ENCODE measurements at regions of chrX and their contacts with region 1.

Region 1: DNA sequence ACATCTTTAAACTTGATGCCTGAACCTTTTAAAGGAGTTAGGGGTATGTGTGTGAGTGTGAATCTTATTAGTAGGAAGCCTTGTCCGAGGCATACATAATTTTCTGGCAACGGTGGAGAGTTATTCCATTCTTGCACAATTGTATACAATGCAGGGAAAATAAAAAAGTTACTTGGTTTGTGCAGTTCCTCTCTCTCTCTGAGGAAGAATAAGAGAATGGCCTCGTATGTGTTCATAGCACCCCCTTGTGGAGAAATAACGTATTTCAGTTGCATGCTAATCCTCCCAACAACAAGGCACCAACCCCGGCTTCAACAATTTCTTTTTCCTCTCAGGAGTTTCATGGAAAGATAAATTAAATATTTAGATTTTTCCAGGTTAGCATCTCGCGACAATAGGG is 33.7 kb upstream of the FGF13 start:
- DNase-seq: peak; percentile 6
- ATAC-seq: no peak
- H3K4me3 Mint-ChIP-seq: no peak overlapping the region
- H3K27ac Mint-ChIP-seq: no peak overlapping the region
- H3K4me1 Mint-ChIP-seq: no peaks in the 10 kb centered on the region
- H3K27me3 Mint-ChIP-seq: peaks cover 5% of the 10 kb centered on the region

Region 2: DNA sequence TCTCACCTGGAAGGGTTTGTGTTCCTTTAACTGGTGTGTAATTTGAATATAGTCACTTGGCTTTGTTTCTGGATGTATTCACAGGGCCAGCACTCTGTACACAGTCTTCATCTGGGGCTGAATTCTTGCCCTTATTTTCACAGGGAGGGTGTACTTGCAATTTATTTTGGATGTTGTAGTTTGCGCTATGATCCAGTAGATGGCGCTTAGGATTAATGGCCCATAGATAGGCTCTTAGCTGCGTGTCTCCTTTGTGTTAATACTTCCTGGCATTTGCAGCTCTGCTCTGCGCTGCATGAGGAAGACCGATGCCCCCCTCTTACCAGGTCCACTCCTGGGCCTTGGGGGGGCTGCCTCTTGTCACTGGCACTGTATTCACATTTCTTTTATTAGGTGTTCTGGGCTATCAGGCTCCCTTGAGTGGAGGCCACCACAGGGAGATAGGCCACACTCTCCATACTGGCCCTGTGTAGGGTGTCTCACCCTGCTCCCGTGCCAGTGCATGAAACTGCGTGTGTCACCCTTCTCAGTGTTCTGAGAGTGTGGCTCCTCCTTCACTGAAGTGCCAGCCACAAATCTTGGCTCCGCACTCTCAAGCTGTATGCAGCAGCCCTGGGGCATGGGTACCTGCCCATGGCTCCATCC is 617.0 kb before region 1 on chrX:
- CTCF ChIA-PET with region 1: interaction called, 4 read pairs
- POLR2A ChIA-PET with region 1: no interaction called
- intact Hi-C with region 1: loop called in 1 of 2 experiments (anchors 1 kb)
- DNase-seq: peak; percentile 7
- ATAC-seq: no peak
- H3K4me3 Mint-ChIP-seq: no peak overlapping the region
- H3K27ac Mint-ChIP-seq: no peak overlapping the region
- H3K4me1 Mint-ChIP-seq: no peaks in the 10 kb centered on the region
- H3K27me3 Mint-ChIP-seq: no peaks in the 10 kb centered on the region

Region 3: GRCh38 chrX:138191998-138192397 is 553.2 kb before region 1 on chrX:
- CTCF ChIA-PET with region 1: interaction called, 3 read pairs
- POLR2A ChIA-PET with region 1: no interaction called
- intact Hi-C with region 1: loop called in 1 of 2 experiments (anchors 2 kb)
- DNase-seq: peak; percentile 15
- ATAC-seq: no peak
- H3K4me3 Mint-ChIP-seq: no peak overlapping the region
- H3K27ac Mint-ChIP-seq: no peak overlapping the region
- H3K4me1 Mint-ChIP-seq: no peaks in the 10 kb centered on the region
- H3K27me3 Mint-ChIP-seq: no peaks in the 10 kb centered on the region

Region 4: DNA sequence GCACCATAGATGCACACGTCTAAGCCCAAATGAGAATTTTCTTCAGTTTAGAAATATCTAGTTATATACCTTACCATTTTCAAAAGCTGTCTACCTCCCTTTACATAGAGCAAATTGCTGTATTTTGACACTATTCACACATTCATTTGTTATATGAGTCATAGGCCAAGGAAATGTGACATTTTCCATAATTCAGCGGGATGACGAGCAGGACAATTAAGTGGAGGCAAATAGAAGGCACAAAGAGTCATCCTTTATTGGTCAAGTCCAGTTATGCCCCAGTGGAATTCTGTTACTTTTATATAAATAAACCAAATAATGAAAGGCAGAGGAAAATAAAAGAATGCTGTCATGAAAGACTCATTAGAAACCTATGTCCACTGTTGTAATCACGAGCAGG is 61.6 kb before region 1 on chrX:
- CTCF ChIA-PET with region 1: no interaction called
- POLR2A ChIA-PET with region 1: no interaction called
- intact Hi-C with region 1: no loop called
- DNase-seq: no peak
- ATAC-seq: no peak
- H3K4me3 Mint-ChIP-seq: no peak overlapping the region
- H3K27ac Mint-ChIP-seq: no peak overlapping the region
- H3K4me1 Mint-ChIP-seq: no peaks in the 10 kb centered on the region
- H3K27me3 Mint-ChIP-seq: no peaks in the 10 kb centered on the region

Measured in activated CD4-positive, alpha-beta T cell treated with anti-CD3 and anti-CD28 coated beads for 36 hours (primary cell).